GM10248 (cell line): ENCODE measurements at regions of chr2 and their contacts with region 1.

Region 1: GRCh38 chr2:231104115-231104713 is 20.6 kb downstream of the HTR2B start:
- DNase-seq: peak; percentile 56
- CTCF ChIP-seq: peak; percentile 88

Region 2: GRCh38 chr2:231084565-231084964 is 19.6 kb before region 1 on chr2:
- CTCF ChIA-PET with region 1: interaction called, 17 read pairs
- POLR2A ChIA-PET with region 1: no interaction called
- DNase-seq: no peak
- CTCF ChIP-seq: no peak

Region 3: GRCh38 chr2:231124838-231125568 is 20.8 kb after region 1 on chr2 and contains the start of gene HTR2B:
- CTCF ChIA-PET with region 1: interaction called, 14 read pairs
- POLR2A ChIA-PET with region 1: no interaction called
- DNase-seq: no peak
- CTCF ChIP-seq: no peak

Region 4: DNA sequence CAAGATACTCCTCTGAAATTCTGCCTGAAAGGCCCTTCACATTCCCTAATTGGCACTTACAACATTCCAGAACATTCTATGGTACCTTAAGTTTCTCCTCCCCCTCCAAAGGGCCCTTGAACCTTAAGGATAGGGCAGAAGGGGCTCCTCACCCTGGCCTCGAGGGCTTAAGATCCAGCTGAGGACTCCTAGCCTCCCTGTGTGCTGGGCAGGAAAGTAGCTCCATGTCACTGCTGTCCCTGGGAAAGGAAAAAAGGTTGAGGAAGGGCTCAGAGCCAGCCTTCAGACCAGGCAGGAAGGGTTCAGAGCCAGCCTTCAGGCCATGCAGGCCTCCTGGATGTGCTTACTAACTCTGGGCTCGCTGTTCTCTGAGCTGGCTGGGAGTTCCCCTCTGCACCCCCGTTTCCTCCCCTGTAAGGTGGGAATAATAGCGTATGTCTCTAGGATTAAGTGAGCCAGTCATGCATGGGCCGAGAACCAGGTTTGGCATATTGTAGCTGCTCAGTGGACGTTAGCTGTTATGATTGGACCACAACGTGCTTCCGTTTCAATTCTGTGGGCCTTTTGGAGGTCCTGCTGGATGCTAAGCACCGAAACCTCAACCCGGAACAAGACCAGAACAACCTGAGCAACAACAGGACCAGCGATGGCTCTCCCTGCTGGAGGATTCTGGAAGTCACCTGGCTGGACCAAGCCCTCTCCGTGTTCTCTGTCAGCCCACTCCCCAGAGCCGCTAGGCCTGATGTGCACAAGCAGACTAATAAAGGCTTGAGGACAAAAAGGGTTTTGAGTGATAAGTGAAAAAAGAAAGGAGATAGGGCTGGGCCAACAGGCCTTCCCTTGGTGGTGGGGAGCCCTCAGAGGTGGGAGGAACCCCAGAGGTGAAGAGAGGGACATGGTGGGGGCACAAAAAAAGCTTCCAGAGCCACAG is 290.3 kb after region 1 on chr2:
- CTCF ChIA-PET with region 1: interaction called, 22 read pairs
- POLR2A ChIA-PET with region 1: no interaction called
- DNase-seq: peak; percentile 82
- CTCF ChIP-seq: peak; percentile 61

Region 5: DNA sequence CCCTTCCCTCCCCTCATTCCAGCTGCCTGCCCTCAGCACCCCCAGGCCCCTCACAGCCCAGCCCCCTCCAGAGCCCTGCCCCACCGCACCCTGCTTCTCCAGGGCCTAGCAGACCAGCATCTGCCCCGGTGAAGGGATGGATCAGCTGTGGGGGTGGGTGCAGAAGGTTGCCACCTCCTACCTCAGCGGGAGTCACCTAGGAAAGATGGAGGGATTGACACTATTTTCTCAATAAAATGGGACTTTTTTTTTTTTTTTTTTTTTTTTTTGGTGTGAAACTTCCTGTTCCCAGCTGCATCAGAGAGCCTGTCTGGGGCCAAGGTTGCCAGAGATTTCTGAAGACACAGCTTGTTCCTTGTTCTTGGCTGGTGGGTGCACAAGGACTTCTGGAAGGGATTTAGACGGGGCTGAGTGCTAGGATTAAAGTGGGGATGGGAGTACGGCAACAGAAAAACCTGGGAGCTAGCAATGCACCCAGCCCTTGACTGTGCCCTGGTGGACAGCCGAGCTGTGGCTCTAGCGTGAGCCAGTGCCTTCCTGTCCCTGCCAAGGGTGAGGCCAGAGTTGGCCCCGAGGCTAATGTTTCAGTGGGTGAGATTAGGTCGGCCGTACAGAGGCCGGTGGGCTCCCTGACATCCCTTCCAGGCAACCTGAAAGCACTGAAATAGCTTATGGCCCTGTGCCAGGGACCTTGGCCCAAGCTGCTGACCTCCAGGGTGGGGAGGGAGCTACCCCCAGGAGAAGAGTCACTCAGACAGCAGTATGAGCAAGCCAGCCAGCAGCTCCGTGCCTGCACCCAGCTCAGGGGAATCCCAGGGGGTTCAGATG is 295.9 kb after region 1 on chr2:
- CTCF ChIA-PET with region 1: interaction called, 148 read pairs
- POLR2A ChIA-PET with region 1: no interaction called
- DNase-seq: no peak
- CTCF ChIP-seq: no peak

Region 6: GRCh38 chr2:231452799-231453508 is 348.7 kb after region 1 on chr2:
- CTCF ChIA-PET with region 1: interaction called, 19 read pairs
- POLR2A ChIA-PET with region 1: interaction called, 11 read pairs
- DNase-seq: no peak
- CTCF ChIP-seq: no peak

Region 7: DNA sequence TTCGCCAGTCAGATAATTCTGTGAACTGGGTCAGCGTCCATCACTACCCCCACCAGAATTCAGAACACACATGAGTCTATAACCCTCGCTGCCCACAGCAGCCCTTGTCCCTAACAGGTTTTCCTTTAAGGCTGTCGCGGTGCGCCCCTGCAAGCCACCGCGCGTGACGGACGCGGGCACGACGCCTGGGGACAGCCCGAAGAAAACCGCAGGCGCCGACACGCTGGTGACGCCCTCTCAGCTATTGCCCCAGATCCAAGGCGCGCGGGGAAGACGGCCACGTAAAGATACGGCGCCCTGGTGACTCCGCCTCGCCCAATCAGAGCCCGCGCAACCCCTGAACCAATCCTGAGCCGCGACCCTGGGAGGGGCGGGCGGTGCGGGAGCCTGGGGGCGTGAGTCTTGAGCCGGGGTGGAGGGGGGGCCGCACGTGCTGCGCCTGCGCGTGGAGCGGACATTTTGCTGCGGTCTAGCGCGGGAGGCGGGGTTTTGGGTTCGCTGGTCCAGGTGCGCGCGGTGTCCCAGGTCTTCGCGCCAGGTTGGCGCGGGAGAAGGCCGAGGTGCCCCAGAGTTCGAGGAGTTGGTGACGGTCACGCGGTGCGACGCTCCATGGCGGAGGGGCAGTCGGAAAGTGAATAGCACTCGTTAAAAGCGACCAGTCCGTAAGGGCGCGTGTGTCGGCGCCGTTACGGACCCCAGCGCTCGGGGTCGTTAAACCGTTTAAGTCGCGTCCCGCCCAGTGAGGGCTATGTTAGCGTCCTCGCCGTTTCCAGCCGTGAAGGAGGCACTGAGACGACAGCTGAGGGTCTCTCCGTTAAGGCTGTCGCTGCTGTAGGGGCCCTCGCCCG is 410.1 kb after region 1 on chr2:
- CTCF ChIA-PET with region 1: no interaction called
- POLR2A ChIA-PET with region 1: no interaction called
- DNase-seq: peak; percentile 100
- CTCF ChIP-seq: no peak